GM10248 (cell line): ENCODE measurements at regions of chr4 and their contacts with region 1.

Region 1: DNA sequence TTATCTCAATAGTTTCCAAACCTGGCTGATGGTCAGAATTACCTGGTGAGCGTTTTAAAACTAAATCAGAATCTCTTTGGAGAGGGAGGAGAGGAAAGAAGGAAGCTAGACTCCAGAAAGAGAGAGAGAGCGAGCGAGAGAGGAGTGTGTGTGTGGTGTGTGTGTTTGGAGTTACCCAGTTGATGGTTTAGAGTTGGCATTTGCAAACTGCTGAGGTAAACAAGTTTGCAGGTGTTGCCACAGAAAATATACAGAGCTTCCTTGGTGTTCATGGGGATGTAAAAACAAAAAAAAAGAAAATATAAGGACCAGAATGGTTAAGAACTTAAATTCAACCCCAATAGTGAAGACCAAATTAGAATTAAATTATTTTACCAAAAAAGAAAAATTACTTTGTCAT is 26.4 kb upstream of the LAP3 start:
- DNase-seq: no peak
- CTCF ChIP-seq: no peak

Region 2: GRCh38 chr4:17463606-17464005 is 86.9 kb before region 1 on chr4:
- CTCF ChIA-PET with region 1: no interaction called
- POLR2A ChIA-PET with region 1: no interaction called
- DNase-seq: no peak
- CTCF ChIP-seq: no peak

Region 3: DNA sequence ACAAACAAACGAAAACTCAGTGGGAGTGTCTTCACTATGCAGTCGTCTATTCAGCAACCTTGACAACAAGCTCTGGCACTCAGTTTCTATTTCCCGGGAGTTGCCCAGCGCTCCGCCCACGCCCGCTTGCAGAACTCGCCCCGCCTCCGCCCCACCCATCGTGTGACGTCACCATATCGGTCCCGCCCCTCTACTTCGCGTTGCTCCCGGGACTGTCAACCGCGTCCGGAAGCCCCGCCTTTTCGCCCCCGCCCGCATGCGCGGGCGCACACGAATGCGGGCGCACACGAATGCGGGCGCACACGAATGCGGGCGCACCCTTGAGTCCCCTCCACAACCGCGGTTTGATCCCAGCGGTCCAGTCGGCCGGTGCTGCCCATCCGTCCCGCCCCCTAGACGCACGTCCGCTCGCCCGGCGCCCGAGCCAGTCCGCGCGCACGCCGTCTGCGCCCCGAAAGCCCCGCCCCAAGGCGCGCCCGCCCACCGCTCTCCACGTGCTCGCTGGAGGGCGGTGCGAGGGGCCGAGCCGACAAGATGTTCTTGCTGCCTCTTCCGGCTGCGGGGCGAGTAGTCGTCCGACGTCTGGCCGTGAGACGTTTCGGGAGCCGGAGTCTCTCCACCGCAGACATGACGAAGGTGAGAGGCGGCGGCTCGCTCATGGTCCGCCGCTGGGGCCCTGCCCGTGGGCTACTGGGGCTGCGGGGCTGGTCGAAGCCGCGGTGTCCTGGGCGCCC is 26.6 kb after region 1 on chr4 and contains the start of gene LAP3:
- CTCF ChIA-PET with region 1: interaction called, 17 read pairs
- POLR2A ChIA-PET with region 1: no interaction called
- DNase-seq: peak; percentile 95
- CTCF ChIP-seq: no peak

Region 4: GRCh38 chr4:17787315-17787714 is 236.8 kb after region 1 on chr4:
- CTCF ChIA-PET with region 1: no interaction called
- POLR2A ChIA-PET with region 1: no interaction called
- DNase-seq: no peak
- CTCF ChIP-seq: no peak